BJ (cell line): ENCODE measurements at regions of chr16 and their contacts with region 1.

Region 1: GRCh38 chr16:66650707-66651473 is 45.7 kb downstream of the CMTM4 start:
- DNase-seq: peak; percentile 54
- H3K4me3 ChIP-seq: no peak overlapping the region
- H3K27me3 ChIP-seq: no peaks in the 10 kb centered on the region
- CTCF ChIP-seq: peak; percentile 97

Region 2: DNA sequence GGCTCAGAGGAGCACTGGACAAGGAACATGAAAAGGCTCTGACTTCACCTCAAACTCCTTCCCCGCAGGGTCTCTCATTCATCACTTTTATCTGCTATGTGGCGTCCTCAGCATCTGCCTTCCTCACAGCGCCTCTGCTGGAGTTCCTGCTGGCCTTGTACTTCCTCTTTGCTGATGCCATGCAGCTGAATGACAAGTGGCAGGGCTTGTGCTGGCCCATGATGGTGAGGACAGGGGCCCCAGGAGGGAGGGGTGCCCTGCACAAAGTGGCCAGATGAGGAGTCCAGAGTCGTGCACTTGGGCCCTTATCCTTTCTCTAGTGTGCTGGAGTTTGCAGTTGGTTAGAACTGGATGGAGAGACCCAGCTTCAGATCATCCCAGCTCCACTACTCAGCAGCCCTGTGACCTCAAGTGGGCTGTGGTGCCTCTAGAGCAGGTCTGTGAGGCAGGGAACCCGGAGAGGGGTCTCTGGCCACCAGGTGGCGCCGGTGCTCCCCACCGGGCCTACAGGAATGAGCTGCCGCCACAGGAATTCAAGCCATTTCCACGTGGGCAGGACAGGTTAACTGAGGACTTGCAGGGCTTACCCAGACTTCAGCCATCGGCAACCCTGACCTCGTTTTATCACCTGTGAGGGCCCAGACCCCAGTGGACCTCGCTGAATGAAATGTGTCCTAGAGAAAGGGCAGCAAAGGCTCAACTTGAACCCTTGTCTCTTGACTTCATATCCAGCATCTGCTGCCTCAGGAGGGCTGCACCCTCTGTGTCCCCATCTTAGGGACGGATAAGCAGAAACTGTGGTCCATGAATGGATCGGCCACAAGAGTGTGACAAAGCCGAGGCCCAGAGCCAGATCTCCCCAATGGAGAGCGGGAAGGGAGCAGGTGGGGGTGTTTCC is 42.4 kb before region 1 on chr16:
- CTCF ChIA-PET with region 1: interaction called, 18 read pairs
- POLR2A ChIA-PET with region 1: no interaction called
- DNase-seq: peak; percentile 32
- H3K4me3 ChIP-seq: no peak overlapping the region
- H3K27me3 ChIP-seq: no peaks in the 10 kb centered on the region
- CTCF ChIP-seq: peak; percentile 94

Region 3: DNA sequence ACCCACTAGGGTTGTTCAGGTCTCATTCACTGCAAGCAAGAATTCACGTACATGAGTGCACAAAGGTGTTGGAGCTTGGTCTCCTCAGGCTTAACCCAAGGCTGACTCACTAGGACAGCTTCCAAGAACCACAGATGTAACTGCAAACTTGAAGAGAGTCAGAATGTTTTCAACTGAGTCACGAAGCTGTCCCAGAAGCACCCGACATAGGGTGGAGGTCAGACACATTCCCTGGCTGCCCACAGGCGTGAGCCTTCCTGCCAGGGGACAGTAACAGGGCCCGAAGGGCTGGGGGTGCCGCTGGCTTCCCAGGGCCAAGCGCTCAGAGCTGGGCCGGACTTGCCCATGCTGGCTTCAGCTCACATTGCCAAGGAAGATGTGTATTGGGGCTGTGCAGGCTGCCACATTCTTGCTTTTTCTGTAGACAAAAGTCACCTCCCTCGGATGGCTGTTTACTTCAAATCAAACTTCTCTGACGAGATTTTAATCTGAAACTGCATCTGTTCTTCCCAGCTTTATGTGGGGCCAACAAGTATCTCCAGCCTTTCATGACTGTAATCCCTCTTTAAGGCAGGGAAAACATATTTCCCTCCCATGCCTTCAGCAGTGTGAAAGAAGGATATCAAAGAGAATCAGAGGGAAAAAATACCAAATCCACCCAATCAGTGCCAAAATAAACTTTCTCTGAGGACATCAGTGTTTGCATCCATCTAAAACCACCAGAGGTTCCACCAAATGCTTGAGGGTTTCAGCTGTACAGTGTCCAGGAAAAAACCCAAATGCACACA is 32.1 kb before region 1 on chr16:
- CTCF ChIA-PET with region 1: interaction called, 38 read pairs
- POLR2A ChIA-PET with region 1: no interaction called
- DNase-seq: peak; percentile 96
- H3K4me3 ChIP-seq: no peak overlapping the region
- H3K27me3 ChIP-seq: no peaks in the 10 kb centered on the region
- CTCF ChIP-seq: no peak

Region 4: GRCh38 chr16:66639091-66639885 is 11.6 kb before region 1 on chr16:
- CTCF ChIA-PET with region 1: interaction called, 42 read pairs
- POLR2A ChIA-PET with region 1: no interaction called
- DNase-seq: no peak
- H3K4me3 ChIP-seq: no peak overlapping the region
- H3K27me3 ChIP-seq: no peaks in the 10 kb centered on the region; the same call in 1 of the 2 replicates
- CTCF ChIP-seq: no peak

Region 5: DNA sequence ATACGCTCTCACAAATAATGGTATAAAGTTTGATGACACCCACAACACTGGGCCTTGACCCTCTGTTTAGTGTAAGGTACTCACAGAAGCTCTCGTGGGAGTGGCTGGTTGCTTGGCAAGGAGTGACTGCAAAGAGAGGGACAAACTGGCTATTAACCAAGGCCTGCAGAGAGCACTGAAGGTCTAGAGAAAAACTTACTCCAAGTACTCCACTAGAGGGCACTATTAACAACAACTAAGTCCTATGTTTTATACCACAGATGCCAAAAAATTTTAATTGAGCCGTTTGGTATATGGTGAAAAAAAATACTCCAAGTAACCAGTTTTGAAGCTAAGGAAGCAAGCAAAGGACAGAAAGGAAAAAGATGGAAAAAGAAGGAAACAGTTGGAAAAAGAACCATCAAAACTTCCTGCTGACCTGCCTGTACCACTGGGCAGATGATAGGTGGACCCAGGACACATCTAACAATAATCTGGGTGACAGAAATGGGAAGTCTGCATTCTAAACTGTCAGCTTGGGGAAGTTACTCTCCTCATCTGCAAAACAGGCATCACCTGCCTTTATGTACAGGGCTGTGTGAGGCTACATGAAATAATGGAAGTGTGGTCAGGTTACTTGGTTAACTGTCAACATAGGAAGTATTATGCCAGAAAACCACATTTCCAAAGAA is 77.4 kb after region 1 on chr16:
- CTCF ChIA-PET with region 1: interaction called, 12 read pairs
- POLR2A ChIA-PET with region 1: no interaction called
- DNase-seq: no peak
- H3K4me3 ChIP-seq: no peak overlapping the region
- H3K27me3 ChIP-seq: no peaks in the 10 kb centered on the region
- CTCF ChIP-seq: peak; percentile 60

Region 6: GRCh38 chr16:66880288-66881013 is 229.6 kb after region 1 on chr16 and contains the start of gene PDP2:
- CTCF ChIA-PET with region 1: no interaction called
- POLR2A ChIA-PET with region 1: no interaction called
- DNase-seq: no peak
- H3K4me3 ChIP-seq: peak within 1 kb of the TSS; percentile 83
- H3K27me3 ChIP-seq: no peaks in the 10 kb centered on the region
- CTCF ChIP-seq: no peak
- polyA plus RNA-seq, gene PDP2: 8.1 and 10.3 TPM in 2 replicates